ENCODE measurements at regions of chr3 and their contacts with region 1.

Region 1: GRCh38 chr3:152524198-152525140 is 255.7 kb downstream of the MBNL1 start:
- DNase-seq: peak in 6 of 9 donors; percentile 15 to 55 (median 44)
- ATAC-seq: peak; percentile 68
- H3K4me3 ChIP-seq: no peak overlapping the region
- H3K4me3 Mint-ChIP-seq: no peak overlapping the region
- H3K27ac ChIP-seq: no peak overlapping the region
- H3K27ac Mint-ChIP-seq: no peak overlapping the region
- H3K4me1 ChIP-seq: no peaks in the 10 kb centered on the region
- H3K4me1 Mint-ChIP-seq: no peaks in the 10 kb centered on the region
- H3K27me3 ChIP-seq: no peaks in the 10 kb centered on the region
- H3K27me3 Mint-ChIP-seq: peaks cover 0 to 12% (median 0%) of the 10 kb centered on the region in 5 donors

Region 2: DNA sequence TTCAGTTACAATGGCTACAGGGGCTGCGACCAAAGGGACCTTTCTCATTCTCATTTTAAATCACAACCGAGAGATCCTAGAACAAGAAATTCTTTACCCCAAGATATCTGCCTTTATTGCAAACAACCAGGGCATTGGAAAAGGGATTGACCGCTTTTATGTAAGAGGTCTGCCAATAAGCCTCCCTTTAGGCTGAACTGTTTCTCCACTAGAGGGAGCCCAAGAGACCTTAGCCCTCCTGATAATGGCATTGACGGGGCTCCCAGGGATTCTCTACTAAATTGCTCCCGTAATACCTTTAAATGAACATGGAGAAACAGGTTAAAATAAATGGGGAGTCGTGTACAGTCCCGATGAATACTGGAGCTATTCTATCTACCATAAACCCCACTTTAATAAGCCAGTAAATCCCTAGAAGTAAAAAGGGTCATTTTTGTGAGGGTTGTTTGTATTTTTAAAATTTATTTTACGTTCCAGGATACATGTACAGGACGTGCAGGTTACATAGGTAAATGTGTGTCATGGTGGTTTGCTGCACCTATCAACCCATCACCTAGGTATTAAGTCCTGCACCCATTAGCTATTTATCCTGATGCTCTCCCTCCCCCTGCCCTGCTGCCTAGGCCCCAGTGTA is 1056.1 kb before region 1 on chr3:
- CTCF ChIA-PET with region 1: interaction called, 4 read pairs
- POLR2A ChIA-PET with region 1: no interaction called
- intact Hi-C with region 1: loop called in 1 of 2 experiments (anchors 10 kb)
- DNase-seq: peak in 7 of 9 donors; percentile 14 to 64 (median 31)
- ATAC-seq: peak; percentile 67
- H3K4me3 ChIP-seq: no peak overlapping the region
- H3K4me3 Mint-ChIP-seq: no peak overlapping the region
- H3K27ac ChIP-seq: no peak overlapping the region
- H3K27ac Mint-ChIP-seq: no peak overlapping the region
- H3K4me1 ChIP-seq: no peaks in the 10 kb centered on the region
- H3K4me1 Mint-ChIP-seq: no peaks in the 10 kb centered on the region
- H3K27me3 ChIP-seq: no peaks in the 10 kb centered on the region
- H3K27me3 Mint-ChIP-seq: peaks cover 10 to 22% (median 12%) of the 10 kb centered on the region in 5 donors

Region 3: GRCh38 chr3:152026033-152026556 is 498.4 kb before region 1 on chr3:
- CTCF ChIA-PET with region 1: no interaction called
- POLR2A ChIA-PET with region 1: no interaction called
- intact Hi-C with region 1: loop called in 1 of 2 experiments (anchors 1 kb)
- DNase-seq: peak in 1 of 9 donors; percentile 2
- ATAC-seq: no peak
- H3K4me3 ChIP-seq: no peak overlapping the region
- H3K4me3 Mint-ChIP-seq: no peak overlapping the region
- H3K27ac ChIP-seq: no peak overlapping the region
- H3K27ac Mint-ChIP-seq: no peak overlapping the region
- H3K4me1 ChIP-seq: no peaks in the 10 kb centered on the region
- H3K4me1 Mint-ChIP-seq: no peaks in the 10 kb centered on the region
- H3K27me3 ChIP-seq: peaks cover 0 to 4% of the 10 kb centered on the region in 2 donors
- H3K27me3 Mint-ChIP-seq: peaks cover 0 to 18% (median 4%) of the 10 kb centered on the region in 5 donors

Region 4: GRCh38 chr3:152183473-152183872 is 341.0 kb before region 1 on chr3:
- CTCF ChIA-PET with region 1: no interaction called
- POLR2A ChIA-PET with region 1: no interaction called
- intact Hi-C with region 1: loop called in 1 of 2 experiments (anchors 1 kb)
- DNase-seq: peak in 7 of 9 donors; percentile 41 to 64 (median 55)
- ATAC-seq: peak; percentile 83
- H3K4me3 ChIP-seq: no peak overlapping the region
- H3K4me3 Mint-ChIP-seq: peak overlapping the region; percentile 40 to 74 (median 52)
- H3K27ac ChIP-seq: no peak overlapping the region
- H3K27ac Mint-ChIP-seq: peak overlapping the region in 8 of 9 donors; percentile 48 to 89 (median 70)
- H3K4me1 ChIP-seq: peaks cover 13 to 34% of the 10 kb centered on the region in 2 donors
- H3K4me1 Mint-ChIP-seq: peaks cover 39 to 82% (median 76%) of the 10 kb centered on the region in 7 donors
- H3K27me3 ChIP-seq: no peaks in the 10 kb centered on the region
- H3K27me3 Mint-ChIP-seq: no peaks in the 10 kb centered on the region

Region 5: DNA sequence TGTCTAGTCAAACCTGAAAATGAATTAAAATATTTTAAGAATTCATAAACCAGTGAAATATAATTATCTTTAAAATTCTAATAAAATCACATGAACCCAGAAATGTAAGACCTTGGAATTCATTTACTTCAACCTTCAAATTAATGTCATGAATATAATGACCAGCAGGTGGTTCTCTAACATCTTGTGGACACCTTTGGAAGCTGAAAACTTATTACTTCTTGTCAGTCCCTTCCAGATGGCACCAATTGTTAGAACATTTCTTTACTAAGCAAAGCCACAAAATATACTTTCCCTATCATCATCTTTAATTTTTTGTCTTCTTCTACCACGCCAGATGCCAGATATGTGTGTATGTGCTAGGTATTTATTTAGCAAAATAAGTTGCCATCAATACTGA is 15.8 kb before region 1 on chr3:
- CTCF ChIA-PET with region 1: interaction called, 5 read pairs
- POLR2A ChIA-PET with region 1: no interaction called
- intact Hi-C with region 1: loop called in 1 of 2 experiments (anchors 1 kb)
- DNase-seq: no peak
- ATAC-seq: no peak
- H3K4me3 ChIP-seq: no peak overlapping the region
- H3K4me3 Mint-ChIP-seq: no peak overlapping the region
- H3K27ac ChIP-seq: no peak overlapping the region
- H3K27ac Mint-ChIP-seq: no peak overlapping the region
- H3K4me1 ChIP-seq: no peaks in the 10 kb centered on the region
- H3K4me1 Mint-ChIP-seq: peaks cover 0 to 22% (median 0%) of the 10 kb centered on the region in 7 donors
- H3K27me3 ChIP-seq: no peaks in the 10 kb centered on the region
- H3K27me3 Mint-ChIP-seq: peaks cover 0 to 6% (median 0%) of the 10 kb centered on the region in 5 donors

Measured in naive thymus-derived CD4-positive, alpha-beta T cell (primary cell).